Activated CD8-positive, alpha-beta T cell treated with anti-CD3 and anti-CD28 coated beads for 36 hours (primary cell): ENCODE measurements at regions of chr13 and their contacts with region 1.

Region 1: DNA sequence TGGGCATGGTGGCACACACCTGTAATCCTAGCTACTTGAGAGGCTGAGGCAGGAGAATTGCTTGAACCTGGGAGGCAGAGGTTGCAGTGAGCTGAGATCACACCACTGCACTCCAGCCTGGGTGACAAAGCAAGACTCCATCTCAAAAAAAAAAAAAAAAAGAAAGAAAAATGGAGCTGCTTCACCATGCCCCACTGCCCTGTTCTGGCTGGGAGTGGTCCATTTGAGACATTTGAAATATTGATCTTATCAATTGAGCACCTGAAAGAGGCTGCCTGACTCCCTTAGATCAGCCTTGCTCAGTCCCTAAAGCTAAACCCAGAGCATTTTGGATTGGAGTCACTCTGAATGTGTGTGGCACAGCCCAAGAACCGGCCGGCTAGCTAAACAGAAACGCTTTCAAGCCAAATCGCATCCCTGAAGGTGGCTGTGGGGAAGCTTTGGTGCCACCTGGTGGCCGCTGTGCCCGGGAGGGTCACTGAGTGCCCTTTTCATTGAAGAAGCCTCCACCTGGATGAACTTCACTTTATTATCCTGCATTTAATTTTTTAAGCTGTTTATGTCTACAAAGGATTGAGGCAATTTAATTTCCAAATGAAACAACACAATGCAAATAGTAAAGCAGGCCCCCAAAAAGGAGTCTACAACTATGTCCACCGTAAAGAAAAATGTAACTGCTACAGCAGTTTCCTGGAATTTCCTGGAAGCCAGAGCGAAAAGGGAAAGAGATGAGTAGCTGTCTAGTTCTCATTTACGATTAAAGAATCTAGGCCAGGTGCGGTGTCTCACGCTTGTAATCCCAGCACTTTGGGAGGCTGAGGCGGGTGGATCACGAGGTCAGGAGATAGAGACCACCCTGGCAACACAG is 53.1 kb upstream of the SERPINE3 start:
- DNase-seq: peak; percentile 86
- ATAC-seq: peak; percentile 89
- H3K4me3 Mint-ChIP-seq: no peak overlapping the region
- H3K27ac Mint-ChIP-seq: no peak overlapping the region
- H3K4me1 Mint-ChIP-seq: peaks cover 6% of the 10 kb centered on the region
- H3K27me3 Mint-ChIP-seq: no peaks in the 10 kb centered on the region
- CTCF ChIP-seq: peak; percentile 88

Region 2: GRCh38 chr13:51125498-51126226 is 160.7 kb before region 1 on chr13:
- CTCF ChIA-PET with region 1: interaction called, 168 read pairs
- POLR2A ChIA-PET with region 1: no interaction called
- intact Hi-C with region 1: loop called (anchors 1 kb)
- DNase-seq: peak; percentile 67
- ATAC-seq: peak; percentile 72
- H3K4me3 Mint-ChIP-seq: no peak overlapping the region
- H3K27ac Mint-ChIP-seq: no peak overlapping the region
- H3K4me1 Mint-ChIP-seq: peaks cover 14% of the 10 kb centered on the region
- H3K27me3 Mint-ChIP-seq: peaks cover 19% of the 10 kb centered on the region
- CTCF ChIP-seq: peak; percentile 77

Region 3: DNA sequence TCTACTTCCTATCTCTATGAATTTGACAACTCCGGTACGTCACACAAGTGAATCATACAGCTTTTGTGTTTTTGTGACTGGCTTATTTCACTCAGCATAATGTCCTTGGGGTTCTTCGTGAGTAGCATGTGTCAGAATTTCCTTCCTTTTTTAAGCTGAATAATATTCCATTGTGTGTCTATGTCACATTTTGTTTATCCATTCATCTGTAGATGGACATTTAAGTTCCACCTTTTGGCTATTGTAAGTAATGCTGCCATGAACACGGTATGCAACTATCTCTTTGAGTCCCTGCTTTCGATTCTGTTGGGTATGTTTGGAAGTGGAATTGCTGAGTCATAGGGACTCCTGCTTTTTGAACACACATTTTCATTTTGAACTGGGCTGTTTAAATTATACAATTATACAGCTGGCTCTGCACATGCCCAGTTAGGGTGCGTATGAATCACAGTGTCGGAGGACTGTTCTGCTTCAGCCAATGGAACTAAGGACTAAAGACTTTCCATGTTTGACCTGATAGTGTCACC is 132.3 kb before region 1 on chr13:
- CTCF ChIA-PET with region 1: interaction called, 17 read pairs
- POLR2A ChIA-PET with region 1: no interaction called
- intact Hi-C with region 1: no loop called
- DNase-seq: no peak
- ATAC-seq: peak; percentile 59
- H3K4me3 Mint-ChIP-seq: no peak overlapping the region
- H3K27ac Mint-ChIP-seq: no peak overlapping the region
- H3K4me1 Mint-ChIP-seq: peaks cover 10% of the 10 kb centered on the region
- H3K27me3 Mint-ChIP-seq: peaks cover 13% of the 10 kb centered on the region
- CTCF ChIP-seq: no peak

Region 4: DNA sequence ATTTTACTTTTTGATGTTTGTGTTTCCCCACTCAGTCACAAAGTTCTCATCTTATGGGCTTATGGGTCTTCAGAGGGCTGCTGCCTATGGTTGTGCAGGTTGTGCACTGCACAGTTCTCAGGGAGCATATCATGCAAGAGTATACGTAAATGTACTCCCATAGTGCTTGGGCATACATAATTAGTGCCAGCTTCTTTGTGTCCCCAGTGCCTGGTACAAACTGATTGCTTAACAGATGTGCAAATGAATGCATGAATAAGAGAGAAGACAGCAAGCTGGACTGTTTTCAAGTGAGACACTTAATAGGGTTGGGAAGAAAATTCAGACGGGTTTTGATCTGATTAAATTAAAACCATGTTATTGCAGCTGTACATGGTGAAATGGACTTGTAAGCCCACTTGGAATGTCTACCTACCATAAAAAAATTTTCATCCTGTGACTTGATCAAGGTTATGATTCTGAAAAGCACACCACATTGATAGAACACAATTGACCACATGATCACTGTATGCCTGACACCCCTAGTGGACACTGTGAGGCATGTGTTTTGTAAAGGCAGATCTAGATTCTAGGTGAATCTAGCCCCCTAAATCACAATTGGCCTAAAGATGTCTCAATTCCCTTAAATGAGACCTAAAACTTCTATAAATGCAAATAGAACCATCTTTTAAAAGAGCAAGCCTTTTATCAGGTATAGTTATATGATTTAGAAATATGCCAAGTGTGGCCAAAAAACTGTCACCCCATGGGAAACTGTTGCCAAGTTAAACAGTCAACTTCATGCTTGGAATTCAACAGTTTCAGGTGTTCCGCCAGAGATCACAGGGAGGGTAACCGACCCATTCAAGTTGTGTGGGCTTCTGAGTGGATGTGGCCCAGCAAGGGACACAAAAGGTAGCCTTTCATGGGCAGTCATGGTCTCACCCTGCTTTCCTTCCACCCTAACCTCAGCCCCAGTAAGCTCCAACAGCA is 36.3 kb before region 1 on chr13:
- CTCF ChIA-PET with region 1: interaction called, 20 read pairs
- POLR2A ChIA-PET with region 1: interaction called, 4 read pairs
- intact Hi-C with region 1: no loop called
- DNase-seq: no peak
- ATAC-seq: no peak
- H3K4me3 Mint-ChIP-seq: no peak overlapping the region
- H3K27ac Mint-ChIP-seq: no peak overlapping the region
- H3K4me1 Mint-ChIP-seq: peaks cover 7% of the 10 kb centered on the region
- H3K27me3 Mint-ChIP-seq: peaks cover 6% of the 10 kb centered on the region
- CTCF ChIP-seq: no peak

Region 5: GRCh38 chr13:51297556-51297955 is 11.2 kb after region 1 on chr13:
- CTCF ChIA-PET with region 1: interaction called, 55 read pairs
- POLR2A ChIA-PET with region 1: no interaction called
- intact Hi-C with region 1: no loop called
- DNase-seq: no peak
- ATAC-seq: no peak
- H3K4me3 Mint-ChIP-seq: no peak overlapping the region
- H3K27ac Mint-ChIP-seq: no peak overlapping the region
- H3K4me1 Mint-ChIP-seq: no peaks in the 10 kb centered on the region
- H3K27me3 Mint-ChIP-seq: no peaks in the 10 kb centered on the region
- CTCF ChIP-seq: no peak

Region 6: DNA sequence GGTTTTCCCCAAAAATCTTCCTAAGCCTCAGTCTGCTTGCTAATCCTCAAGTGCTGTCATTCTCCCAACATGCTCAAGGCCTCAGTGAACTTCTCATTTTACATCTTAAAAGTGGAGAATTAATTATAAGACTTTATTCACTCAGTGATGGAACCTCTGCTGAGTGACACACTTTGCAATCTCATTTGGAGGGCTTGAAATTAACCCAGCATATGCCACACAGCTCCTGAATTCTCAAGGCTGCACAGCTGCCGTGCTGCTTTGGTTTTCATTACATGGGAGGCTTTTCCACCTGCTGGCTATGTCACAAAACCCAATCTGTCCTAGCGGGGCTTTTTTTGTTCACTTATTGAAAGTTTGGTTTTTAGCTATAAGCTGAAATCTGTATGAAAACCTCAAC is 24.9 kb after region 1 on chr13:
- CTCF ChIA-PET with region 1: interaction called, 11 read pairs
- POLR2A ChIA-PET with region 1: no interaction called
- intact Hi-C with region 1: no loop called
- DNase-seq: no peak
- ATAC-seq: no peak
- H3K4me3 Mint-ChIP-seq: no peak overlapping the region
- H3K27ac Mint-ChIP-seq: no peak overlapping the region
- H3K4me1 Mint-ChIP-seq: no peaks in the 10 kb centered on the region
- H3K27me3 Mint-ChIP-seq: peaks cover 4% of the 10 kb centered on the region
- CTCF ChIP-seq: no peak

Region 7: DNA sequence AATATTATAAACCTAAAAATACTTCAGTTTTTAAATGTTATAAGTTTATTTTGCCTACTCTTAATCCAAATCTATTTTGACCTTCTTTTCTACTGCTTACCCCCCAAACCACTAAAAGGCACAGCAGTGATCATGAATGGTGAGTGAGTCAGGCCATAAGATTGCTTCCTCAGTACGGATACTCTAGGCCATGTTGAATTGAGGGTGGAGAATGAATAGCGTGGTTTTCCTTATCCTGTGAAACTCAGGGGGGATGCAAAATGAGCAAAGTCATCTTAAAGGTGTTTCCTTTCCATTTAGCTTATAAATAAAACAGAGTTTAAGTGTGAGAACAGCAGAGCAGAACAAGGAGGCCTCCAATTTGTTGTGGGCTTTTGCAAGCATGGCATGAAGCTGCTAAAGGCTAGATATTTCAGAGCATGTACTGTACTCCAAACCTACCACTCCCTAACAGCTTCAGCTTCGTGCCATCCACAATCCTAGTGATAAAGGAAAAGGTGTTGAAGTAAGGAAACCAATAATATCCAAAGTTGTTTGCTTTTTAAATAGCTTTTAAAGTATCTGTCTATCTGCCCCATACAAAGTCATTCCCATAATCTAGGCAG is 78.1 kb after region 1 on chr13:
- CTCF ChIA-PET with region 1: no interaction called
- POLR2A ChIA-PET with region 1: no interaction called
- intact Hi-C with region 1: no loop called
- DNase-seq: no peak
- ATAC-seq: peak; percentile 47
- H3K4me3 Mint-ChIP-seq: no peak overlapping the region
- H3K27ac Mint-ChIP-seq: peak overlapping the region; percentile 4
- H3K4me1 Mint-ChIP-seq: peaks cover 14% of the 10 kb centered on the region
- H3K27me3 Mint-ChIP-seq: no peaks in the 10 kb centered on the region
- CTCF ChIP-seq: no peak

Region 8: GRCh38 chr13:51520524-51520923 is 234.2 kb after region 1 on chr13:
- CTCF ChIA-PET with region 1: no interaction called
- POLR2A ChIA-PET with region 1: no interaction called
- intact Hi-C with region 1: no loop called
- DNase-seq: peak; percentile 18
- ATAC-seq: no peak
- H3K4me3 Mint-ChIP-seq: no peak overlapping the region
- H3K27ac Mint-ChIP-seq: no peak overlapping the region
- H3K4me1 Mint-ChIP-seq: peaks cover 19% of the 10 kb centered on the region
- H3K27me3 Mint-ChIP-seq: no peaks in the 10 kb centered on the region
- CTCF ChIP-seq: no peak